GM10248 (cell line): ENCODE measurements at regions of chr22 and their contacts with region 1.

Region 1: DNA sequence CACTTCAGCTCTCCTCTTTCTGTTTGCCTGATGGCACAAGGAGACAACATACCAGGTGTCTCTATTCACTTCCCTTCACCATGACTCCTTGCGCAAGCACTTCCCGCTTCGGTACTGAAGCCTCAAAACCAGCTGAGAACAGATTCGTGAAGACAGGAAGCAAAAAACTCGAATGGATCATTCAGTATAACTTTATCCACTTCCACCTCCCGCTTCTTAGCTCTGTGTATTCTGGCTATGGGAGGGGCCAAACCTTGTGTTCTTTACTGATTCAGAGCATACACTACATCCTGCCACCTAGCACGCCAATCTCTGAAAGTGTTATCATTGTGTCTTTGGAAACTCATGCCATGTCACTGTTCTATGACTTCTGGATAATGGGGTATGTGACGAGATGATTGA is 62.2 kb upstream of the ADA2 start:
- DNase-seq: no peak
- CTCF ChIP-seq: no peak

Region 2: GRCh38 chr22:17266251-17266971 is 15.0 kb before region 1 on chr22:
- CTCF ChIA-PET with region 1: interaction called, 10 read pairs
- POLR2A ChIA-PET with region 1: no interaction called
- DNase-seq: no peak
- CTCF ChIP-seq: no peak

Region 3: DNA sequence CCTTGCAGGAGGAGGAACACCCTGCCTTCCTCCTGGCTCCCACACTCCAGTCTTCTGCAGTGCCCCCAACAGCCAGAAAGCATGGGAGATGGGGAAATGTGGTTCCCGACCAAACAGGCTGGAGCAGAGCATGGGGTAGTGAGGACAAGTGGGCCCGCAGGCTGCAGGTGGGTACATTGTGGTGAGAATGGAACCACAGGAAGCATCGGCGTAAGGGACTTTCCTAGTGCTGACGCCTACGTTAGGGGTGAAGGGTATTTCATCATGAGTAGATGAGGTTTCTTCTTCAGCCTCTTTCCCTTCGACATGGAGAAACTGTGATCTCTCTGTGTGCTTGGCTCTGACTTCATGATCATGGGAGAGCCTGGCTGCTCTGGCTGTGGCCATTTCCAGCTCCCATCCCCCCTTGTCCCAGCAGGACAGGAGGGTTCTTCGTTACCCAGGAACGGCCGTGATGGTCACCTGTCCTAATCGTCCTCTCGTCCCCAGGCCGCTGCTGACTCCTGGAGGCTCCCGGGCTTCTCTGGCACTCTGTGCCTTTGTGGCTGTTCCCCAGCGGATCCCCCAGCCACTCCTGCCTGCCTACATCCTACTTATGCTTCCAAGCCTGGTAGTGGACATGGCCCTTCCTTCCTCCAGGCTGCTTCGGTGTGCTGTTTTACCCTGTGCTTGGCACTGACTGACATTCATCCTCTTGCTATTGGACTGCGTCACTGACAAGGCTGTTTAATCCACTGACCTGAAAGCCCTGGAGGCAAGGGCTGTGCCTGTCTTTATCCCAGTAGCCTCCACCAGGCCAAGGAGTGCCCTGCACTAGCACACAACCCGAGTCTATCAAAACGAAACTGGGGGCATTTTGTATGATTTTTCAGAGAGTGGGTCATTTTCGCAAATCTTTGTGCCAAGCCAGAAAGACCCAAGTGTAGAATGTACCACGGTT is 22.7 kb after region 1 on chr22:
- CTCF ChIA-PET with region 1: interaction called, 16 read pairs
- POLR2A ChIA-PET with region 1: no interaction called
- DNase-seq: peak; percentile 76
- CTCF ChIP-seq: no peak